OCI-LY7 (cell line): ENCODE measurements at regions of chr1 and their contacts with region 1.

Region 1: GRCh38 chr1:212994926-212995325 is 20.7 kb downstream of the ANGEL2 start:
- DNase-seq: no peak
- H3K4me3 ChIP-seq: no peak overlapping the region
- H3K27ac ChIP-seq: no peak overlapping the region
- H3K4me1 ChIP-seq: no peaks in the 10 kb centered on the region
- CTCF ChIP-seq: no peak

Region 2: DNA sequence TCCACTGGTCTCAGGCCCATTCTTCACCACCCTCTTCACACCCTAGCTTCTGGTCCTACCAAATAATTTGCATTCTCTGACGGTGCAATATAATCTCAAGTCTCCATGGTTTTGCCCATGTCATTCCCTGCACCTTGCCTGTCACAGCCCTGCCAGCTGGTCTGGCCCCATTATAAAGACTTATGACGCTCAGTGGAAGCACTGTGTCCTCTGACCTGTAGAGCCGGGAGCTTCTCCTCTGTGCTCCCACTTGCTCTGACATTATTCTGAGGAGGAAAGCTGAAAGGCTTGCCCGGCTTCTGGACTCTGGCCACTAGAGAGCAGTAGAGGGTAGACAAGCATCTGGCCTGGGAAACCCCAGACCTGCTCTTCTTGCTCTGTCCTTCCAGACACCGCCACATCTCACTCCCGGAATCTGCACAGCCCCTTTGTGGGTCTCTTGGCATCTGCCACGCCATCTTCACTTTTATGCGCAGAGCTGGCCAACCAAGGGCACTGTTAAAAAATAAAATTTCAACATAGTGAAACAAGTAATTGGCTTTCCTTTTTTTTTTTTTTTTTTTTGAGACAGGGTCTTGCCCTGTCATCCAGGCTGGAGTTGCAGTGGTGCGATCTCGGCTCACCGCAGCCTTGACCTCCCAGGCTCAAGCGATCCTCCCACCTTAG is 517.8 kb before region 1 on chr1:
- CTCF ChIA-PET with region 1: no interaction called
- POLR2A ChIA-PET with region 1: no interaction called
- intact Hi-C with region 1: loop called (anchors 2 kb)
- DNase-seq: peak; percentile 85
- H3K4me3 ChIP-seq: no peak overlapping the region
- H3K27ac ChIP-seq: no peak overlapping the region
- H3K4me1 ChIP-seq: no peaks in the 10 kb centered on the region
- CTCF ChIP-seq: peak; percentile 93

Region 3: GRCh38 chr1:212665241-212666115 is 329.4 kb before region 1 on chr1:
- CTCF ChIA-PET with region 1: interaction called, 3 read pairs
- POLR2A ChIA-PET with region 1: no interaction called
- intact Hi-C with region 1: loop called (anchors 1 kb)
- DNase-seq: peak; percentile 75
- H3K4me3 ChIP-seq: peak overlapping the region; percentile 24
- H3K27ac ChIP-seq: no peak overlapping the region
- H3K4me1 ChIP-seq: peaks cover 7% of the 10 kb centered on the region
- CTCF ChIP-seq: peak; percentile 85

Region 4: GRCh38 chr1:212749821-212750535 is 244.9 kb before region 1 on chr1:
- CTCF ChIA-PET with region 1: no interaction called
- POLR2A ChIA-PET with region 1: interaction called, 3 read pairs
- intact Hi-C with region 1: loop called (anchors 5 kb)
- DNase-seq: peak; percentile 47
- H3K4me3 ChIP-seq: no peak overlapping the region
- H3K27ac ChIP-seq: peak overlapping the region; percentile 37
- H3K4me1 ChIP-seq: peaks cover 41% of the 10 kb centered on the region
- CTCF ChIP-seq: peak; percentile 96

Region 5: DNA sequence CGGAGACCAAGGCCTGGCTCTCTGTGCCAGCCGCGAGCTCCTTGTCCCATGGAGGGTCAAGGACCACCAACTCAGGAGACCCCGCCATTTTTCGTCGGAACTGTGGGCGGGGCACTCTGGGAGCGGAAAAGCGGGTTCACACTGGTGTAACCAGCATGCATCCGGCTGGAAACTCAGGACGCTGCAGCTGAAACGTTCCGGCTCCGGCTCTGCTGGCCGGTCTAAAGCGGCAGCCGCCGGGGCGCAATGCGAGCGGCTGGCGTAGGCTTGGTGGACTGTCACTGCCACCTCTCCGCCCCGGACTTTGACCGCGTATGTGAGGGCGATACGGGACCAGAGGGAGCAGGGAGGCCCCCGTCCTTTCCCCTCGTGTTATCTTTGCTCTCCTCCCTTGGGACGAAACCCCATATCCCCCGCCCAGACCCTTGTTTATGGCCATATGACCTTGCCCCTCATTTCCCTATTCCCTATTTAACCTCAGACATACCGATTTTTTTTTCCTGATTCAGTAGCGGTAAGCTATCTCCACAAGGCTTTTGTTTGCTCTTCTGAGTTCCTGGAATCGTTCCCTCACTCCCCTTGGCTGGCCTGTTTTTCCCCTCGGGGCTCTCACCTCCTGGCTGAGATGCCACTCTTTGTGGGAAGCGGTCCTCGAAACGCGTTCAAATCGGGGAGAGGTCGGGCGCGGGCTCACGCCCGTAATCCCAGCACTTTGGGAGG is 203.1 kb before region 1 on chr1 and contains the starts of genes NSL1 and TATDN3:
- CTCF ChIA-PET with region 1: no interaction called
- POLR2A ChIA-PET with region 1: interaction called, 6 read pairs
- intact Hi-C with region 1: loop called (anchors 1 kb)
- DNase-seq: peak; percentile 94
- H3K4me3 ChIP-seq: peak within 1 kb of the TSS; percentile 89
- H3K27ac ChIP-seq: peak within 1 kb of the TSS; percentile 89
- H3K4me1 ChIP-seq: peaks cover 62% of the 10 kb centered on the region
- CTCF ChIP-seq: no peak
- total RNA-seq, gene NSL1: 70.9 and 74.9 TPM in 2 replicates
- total RNA-seq, gene TATDN3: 35.4 and 36.1 TPM in 2 replicates

Region 6: DNA sequence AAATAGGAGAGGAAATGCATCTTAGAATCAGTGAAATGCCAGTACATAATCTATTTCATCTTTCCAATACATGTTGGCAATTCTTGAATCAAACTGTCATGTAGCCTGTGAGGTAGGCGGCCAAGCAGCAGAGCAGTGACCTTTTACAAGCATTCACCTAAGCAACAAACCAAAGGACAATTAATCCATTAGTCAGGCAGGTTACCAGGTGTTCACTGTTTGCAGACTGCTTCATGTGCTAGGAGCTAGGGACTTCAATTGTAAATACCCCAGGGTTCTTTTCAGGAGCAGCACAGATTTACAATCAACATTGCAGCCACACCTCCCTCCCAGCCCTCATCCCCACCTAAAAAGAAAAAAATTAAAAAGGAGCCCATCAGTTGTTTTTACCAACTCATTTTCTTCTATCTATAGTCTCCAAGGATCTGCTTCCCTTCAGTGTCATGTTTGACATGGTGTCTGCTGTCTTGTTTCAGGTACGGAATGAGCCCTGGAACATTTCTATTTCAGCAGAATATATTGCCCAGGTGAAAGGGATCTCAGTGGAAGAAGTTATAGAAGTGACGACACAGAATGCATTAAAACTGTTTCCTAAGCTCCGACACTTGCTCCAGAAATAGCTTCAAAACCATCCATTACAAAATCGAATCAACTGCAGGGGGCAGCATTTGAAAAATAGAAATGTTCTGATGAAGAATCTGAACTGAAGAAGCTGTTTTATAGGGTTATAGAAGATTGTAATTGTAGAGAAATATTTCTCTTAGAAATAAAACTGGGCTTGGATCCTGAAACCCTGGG is 180.2 kb before region 1 on chr1:
- CTCF ChIA-PET with region 1: no interaction called
- POLR2A ChIA-PET with region 1: no interaction called
- intact Hi-C with region 1: loop called (anchors 1 kb)
- DNase-seq: peak; percentile 31
- H3K4me3 ChIP-seq: no peak overlapping the region
- H3K27ac ChIP-seq: no peak overlapping the region
- H3K4me1 ChIP-seq: peaks cover 7% of the 10 kb centered on the region
- CTCF ChIP-seq: peak; percentile 76

Region 7: DNA sequence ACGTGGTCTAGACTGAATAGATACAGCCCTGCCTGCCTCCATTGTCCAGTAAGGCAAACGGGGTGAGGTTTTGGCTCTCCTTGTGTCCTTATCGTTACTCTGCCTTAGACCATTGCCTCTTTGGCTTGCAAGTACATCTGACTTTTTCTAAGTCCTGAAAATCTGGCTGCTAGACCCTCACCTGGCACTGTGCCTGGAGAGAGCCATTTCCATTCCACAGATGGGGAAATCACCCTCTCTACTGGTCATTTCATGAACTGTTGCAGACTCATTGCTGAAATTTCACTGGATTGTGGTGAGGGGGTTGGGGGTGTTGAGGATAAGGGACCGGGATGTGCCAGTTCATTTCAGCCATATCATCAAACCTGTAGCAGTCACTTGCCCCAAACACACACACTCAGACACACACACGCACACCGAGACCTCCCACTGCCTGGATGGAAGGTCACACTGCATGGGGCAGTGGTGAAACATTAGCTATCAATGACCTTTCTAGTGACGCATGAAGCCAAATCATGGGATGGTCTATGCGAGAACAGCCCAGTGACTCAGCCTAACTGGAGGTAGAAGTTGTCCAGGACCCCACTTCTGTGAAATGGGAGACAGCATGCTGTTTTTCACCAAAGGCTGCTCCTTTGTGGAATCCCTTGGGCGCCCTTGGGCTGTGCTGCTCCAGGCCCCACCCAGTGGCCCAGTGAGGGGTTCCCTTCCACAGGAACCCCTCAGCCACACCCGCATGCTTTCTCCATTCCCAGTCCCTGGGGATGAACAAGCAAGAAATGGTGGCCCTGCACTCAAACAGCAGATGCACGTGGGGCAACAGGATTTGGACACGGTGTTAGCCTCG is 79.5 kb before region 1 on chr1:
- CTCF ChIA-PET with region 1: no interaction called
- POLR2A ChIA-PET with region 1: no interaction called
- intact Hi-C with region 1: loop called (anchors 5 kb)
- DNase-seq: peak; percentile 33
- H3K4me3 ChIP-seq: no peak overlapping the region
- H3K27ac ChIP-seq: no peak overlapping the region
- H3K4me1 ChIP-seq: peaks cover 8% of the 10 kb centered on the region
- CTCF ChIP-seq: peak; percentile 71

Region 8: GRCh38 chr1:213123532-213123931 is 128.6 kb after region 1 on chr1:
- CTCF ChIA-PET with region 1: no interaction called
- POLR2A ChIA-PET with region 1: no interaction called
- intact Hi-C with region 1: no loop called
- DNase-seq: no peak
- H3K4me3 ChIP-seq: no peak overlapping the region
- H3K27ac ChIP-seq: no peak overlapping the region
- H3K4me1 ChIP-seq: no peaks in the 10 kb centered on the region
- CTCF ChIP-seq: no peak